ENCODE measurements at regions of chr4 and their contacts with region 1.

Region 1: GRCh38 chr4:93791570-93792195 is 36.9 kb upstream of the ATOH1 start:
- DNase-seq: no peak
- ATAC-seq: no peak

Region 2: DNA sequence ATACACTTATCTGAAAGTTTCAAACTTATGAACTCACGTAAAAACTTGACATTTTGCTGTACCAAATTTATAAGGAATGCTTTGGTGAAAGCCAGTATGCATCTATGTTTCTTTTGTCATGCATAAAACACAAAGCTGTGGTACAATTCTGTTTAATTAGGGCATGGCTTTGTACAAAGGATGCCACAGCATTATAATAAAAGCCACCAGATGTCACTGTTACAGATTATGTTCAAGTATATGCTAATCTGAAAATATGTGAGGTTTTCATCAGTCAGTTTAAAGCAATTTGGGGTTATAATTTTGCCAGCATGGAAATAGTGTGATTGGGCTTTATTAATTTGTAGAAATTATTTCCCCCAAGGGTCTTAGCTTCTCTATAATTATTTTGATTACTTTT is 105.9 kb after region 1 on chr4:
- intact Hi-C with region 1: loop called (anchors 5 kb)
- DNase-seq: no peak
- ATAC-seq: no peak

Region 3: GRCh38 chr4:94127707-94128328 is 336.1 kb after region 1 on chr4:
- intact Hi-C with region 1: loop called (anchors 2 kb)
- DNase-seq: no peak
- ATAC-seq: no peak

Region 4: GRCh38 chr4:94256828-94257227 is 465.1 kb after region 1 on chr4:
- intact Hi-C with region 1: loop called (anchors 5 kb)
- DNase-seq: no peak
- ATAC-seq: no peak

Region 5: GRCh38 chr4:94390804-94391410 is 599.2 kb after region 1 on chr4:
- intact Hi-C with region 1: loop called (anchors 5 kb)
- DNase-seq: no peak
- ATAC-seq: no peak

Region 6: GRCh38 chr4:94507708-94508107 is 716.0 kb after region 1 on chr4:
- intact Hi-C with region 1: no loop called
- DNase-seq: no peak
- ATAC-seq: peak; percentile 93

Measured in Right ventricle myocardium inferior (tissue), 1 donor.